Naive thymus-derived CD4-positive, alpha-beta T cell (primary cell): ENCODE measurements at regions of chr10 and their contacts with region 1.

Region 1: DNA sequence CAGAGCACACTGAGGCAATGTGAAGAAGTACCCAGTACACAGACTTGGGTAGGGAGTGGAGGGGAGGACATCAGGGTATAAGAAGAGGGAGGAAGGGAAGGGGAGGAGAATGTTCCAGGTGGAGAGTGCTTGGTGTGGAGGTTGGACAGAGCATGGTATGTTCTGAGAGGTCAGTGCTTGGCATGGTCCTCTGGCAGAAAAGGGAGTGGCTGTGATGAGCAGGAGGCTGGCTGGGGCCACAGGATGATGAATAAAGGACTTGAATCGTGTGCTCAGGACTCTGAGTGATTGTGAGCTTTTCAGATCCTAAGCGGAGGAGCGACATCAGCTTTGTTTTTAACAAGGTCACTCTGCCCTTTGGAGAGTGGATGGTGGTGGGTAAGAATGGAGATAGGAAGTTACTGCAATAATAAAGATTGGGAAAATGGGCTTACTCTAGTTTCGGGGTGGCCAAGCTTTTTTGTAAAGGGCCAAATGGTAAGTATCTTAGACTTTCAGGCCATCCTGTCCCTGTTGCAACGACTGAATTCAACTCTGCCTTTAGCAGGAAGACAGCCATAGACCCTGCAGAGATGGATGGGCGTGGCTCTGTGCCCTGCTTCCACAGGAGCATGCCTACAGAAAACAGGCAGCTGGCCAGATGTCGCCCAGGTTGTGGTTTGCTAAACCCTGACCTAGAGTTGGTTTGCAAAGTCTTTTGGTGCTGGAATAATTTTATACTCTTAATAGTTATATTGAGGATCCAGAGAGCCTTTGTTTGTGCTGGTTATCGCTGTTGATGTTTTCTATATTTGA is 8.4 kb downstream of the PPP2R2D start:
- DNase-seq: peak in 1 of 9 donors; percentile 6
- ATAC-seq: no peak
- H3K4me3 ChIP-seq: peak overlapping the region; percentile 25
- H3K4me3 Mint-ChIP-seq: peak overlapping the region; percentile 6 to 92 (median 84)
- H3K27ac ChIP-seq: peak overlapping the region; percentile 70
- H3K27ac Mint-ChIP-seq: peak overlapping the region; percentile 72 to 98 (median 92)
- H3K4me1 ChIP-seq: peaks cover 37 to 76% of the 10 kb centered on the region in 2 donors
- H3K4me1 Mint-ChIP-seq: peaks cover 62 to 98% (median 92%) of the 10 kb centered on the region in 7 donors
- H3K27me3 ChIP-seq: no peaks in the 10 kb centered on the region
- H3K27me3 Mint-ChIP-seq: no peaks in the 10 kb centered on the region

Region 2: DNA sequence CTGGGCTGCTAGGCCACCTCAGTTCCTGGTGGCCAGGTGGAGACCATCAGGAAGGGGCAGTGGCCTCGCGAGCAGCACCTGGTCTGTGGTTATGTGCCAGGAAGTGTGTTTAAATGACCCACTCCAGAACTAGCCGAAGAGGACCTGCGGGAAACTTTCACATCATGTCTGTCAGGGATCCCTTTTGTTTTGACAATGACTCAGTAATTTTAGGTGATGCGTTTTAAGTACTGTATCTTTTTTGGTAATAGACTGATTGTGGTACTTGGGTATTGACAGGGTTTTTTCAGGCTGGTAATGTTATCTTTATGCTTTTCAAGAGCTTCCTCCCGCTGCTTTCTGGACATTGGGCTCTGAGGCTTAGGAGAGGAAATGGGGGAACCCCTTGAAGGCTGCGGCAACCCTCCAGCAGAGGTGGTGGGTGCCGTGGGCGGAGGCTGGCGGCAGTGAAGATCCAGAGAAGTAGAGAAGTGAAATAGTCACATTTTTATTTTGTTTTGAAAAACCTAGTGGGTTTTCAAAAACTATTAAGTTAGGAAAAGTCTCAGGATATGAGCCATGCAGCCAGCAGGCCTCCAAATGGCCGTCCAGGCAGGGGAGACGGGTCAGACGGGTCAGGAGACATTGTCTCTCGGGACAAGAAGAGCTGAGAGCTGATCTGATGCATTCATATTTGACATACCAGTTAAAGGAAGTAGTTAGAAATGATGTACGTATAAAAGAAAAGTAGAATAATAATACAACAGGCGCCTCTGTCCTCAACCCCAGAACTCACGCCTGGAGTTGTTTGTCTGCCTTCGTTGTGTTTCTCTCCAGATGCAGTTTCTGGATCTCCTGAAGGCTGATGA is 19.3 kb after region 1 on chr10:
- CTCF ChIA-PET with region 1: no interaction called
- POLR2A ChIA-PET with region 1: interaction called, 10 read pairs
- intact Hi-C with region 1: loop called (anchors 2 kb)
- DNase-seq: peak in 6 of 9 donors; percentile 24 to 68 (median 34)
- ATAC-seq: peak; percentile 85
- H3K4me3 ChIP-seq: no peak overlapping the region
- H3K4me3 Mint-ChIP-seq: peak overlapping the region; percentile 55 to 84 (median 78)
- H3K27ac ChIP-seq: peak overlapping the region; percentile 32
- H3K27ac Mint-ChIP-seq: peak overlapping the region; percentile 79 to 94 (median 86)
- H3K4me1 ChIP-seq: peaks cover 11 to 46% of the 10 kb centered on the region in 2 donors
- H3K4me1 Mint-ChIP-seq: peaks cover 53 to 97% (median 84%) of the 10 kb centered on the region in 7 donors
- H3K27me3 ChIP-seq: no peaks in the 10 kb centered on the region
- H3K27me3 Mint-ChIP-seq: no peaks in the 10 kb centered on the region

Region 3: DNA sequence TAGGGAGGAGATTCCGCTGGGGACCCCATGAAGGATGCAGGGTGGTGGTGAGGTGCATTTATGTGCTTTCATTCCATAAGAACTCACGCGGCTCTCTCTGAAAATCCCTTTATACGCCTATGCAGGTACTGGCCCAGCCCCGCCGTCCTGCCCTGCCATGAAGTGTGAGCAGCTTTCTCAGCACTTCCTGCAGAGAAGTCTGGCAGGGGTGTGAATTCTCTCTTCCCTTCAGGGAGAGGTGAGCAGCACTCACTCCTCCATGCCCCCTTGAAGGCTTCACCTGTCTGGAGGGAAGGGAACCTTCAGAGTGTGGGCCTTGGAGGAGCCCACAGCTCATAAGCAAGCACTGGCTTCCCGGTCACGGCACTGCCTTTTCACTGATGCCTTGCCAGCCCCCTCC is 25.6 kb after region 1 on chr10:
- CTCF ChIA-PET with region 1: no interaction called
- POLR2A ChIA-PET with region 1: interaction called, 3 read pairs
- intact Hi-C with region 1: loop called in 1 of 2 experiments (anchors 2 kb)
- DNase-seq: no peak
- ATAC-seq: no peak
- H3K4me3 ChIP-seq: no peak overlapping the region
- H3K4me3 Mint-ChIP-seq: peak overlapping the region in 3 of 10 donors; percentile 40 to 43 (median 41)
- H3K27ac ChIP-seq: peak overlapping the region; percentile 54
- H3K27ac Mint-ChIP-seq: peak overlapping the region in 7 of 9 donors; percentile 20 to 87 (median 71)
- H3K4me1 ChIP-seq: peaks cover 0 to 34% of the 10 kb centered on the region in 2 donors
- H3K4me1 Mint-ChIP-seq: peaks cover 29 to 61% (median 58%) of the 10 kb centered on the region in 7 donors
- H3K27me3 ChIP-seq: no peaks in the 10 kb centered on the region
- H3K27me3 Mint-ChIP-seq: no peaks in the 10 kb centered on the region

Region 4: GRCh38 chr10:132023092-132023811 is 114.0 kb after region 1 on chr10:
- CTCF ChIA-PET with region 1: interaction called, 11 read pairs
- POLR2A ChIA-PET with region 1: no interaction called
- intact Hi-C with region 1: no loop called
- DNase-seq: peak; percentile 47 to 79 (median 70)
- ATAC-seq: peak; percentile 86
- H3K4me3 ChIP-seq: no peak overlapping the region
- H3K4me3 Mint-ChIP-seq: peak overlapping the region; percentile 14 to 75 (median 66)
- H3K27ac ChIP-seq: no peak overlapping the region
- H3K27ac Mint-ChIP-seq: peak overlapping the region in 3 of 9 donors; percentile 3 to 52 (median 8)
- H3K4me1 ChIP-seq: peaks cover 0 to 6% of the 10 kb centered on the region in 2 donors
- H3K4me1 Mint-ChIP-seq: peaks cover 5 to 16% (median 7%) of the 10 kb centered on the region in 7 donors
- H3K27me3 ChIP-seq: no peaks in the 10 kb centered on the region
- H3K27me3 Mint-ChIP-seq: peaks cover 31 to 49% (median 36%) of the 10 kb centered on the region in 5 donors